ENCODE measurements at regions of chr17 and their contacts with region 1.

Region 1: GRCh38 chr17:44363613-44364159 is at the start of gene FAM171A2:
- DNase-seq: peak; percentile 66 to 75 (median 74)
- H3K4me3 ChIP-seq: peak within 1 kb of the TSS; percentile 57 to 84 (median 70)
- H3K27ac ChIP-seq: peak within 1 kb of the TSS in 1 of 2 experiments; percentile 54
- H3K4me1 ChIP-seq: peaks cover 0 to 32% (median 18%) of the 10 kb centered on the region in 4 experiments
- H3K27me3 ChIP-seq: peaks cover 0 to 3% (median 0%) of the 10 kb centered on the region in 5 experiments

Region 2: DNA sequence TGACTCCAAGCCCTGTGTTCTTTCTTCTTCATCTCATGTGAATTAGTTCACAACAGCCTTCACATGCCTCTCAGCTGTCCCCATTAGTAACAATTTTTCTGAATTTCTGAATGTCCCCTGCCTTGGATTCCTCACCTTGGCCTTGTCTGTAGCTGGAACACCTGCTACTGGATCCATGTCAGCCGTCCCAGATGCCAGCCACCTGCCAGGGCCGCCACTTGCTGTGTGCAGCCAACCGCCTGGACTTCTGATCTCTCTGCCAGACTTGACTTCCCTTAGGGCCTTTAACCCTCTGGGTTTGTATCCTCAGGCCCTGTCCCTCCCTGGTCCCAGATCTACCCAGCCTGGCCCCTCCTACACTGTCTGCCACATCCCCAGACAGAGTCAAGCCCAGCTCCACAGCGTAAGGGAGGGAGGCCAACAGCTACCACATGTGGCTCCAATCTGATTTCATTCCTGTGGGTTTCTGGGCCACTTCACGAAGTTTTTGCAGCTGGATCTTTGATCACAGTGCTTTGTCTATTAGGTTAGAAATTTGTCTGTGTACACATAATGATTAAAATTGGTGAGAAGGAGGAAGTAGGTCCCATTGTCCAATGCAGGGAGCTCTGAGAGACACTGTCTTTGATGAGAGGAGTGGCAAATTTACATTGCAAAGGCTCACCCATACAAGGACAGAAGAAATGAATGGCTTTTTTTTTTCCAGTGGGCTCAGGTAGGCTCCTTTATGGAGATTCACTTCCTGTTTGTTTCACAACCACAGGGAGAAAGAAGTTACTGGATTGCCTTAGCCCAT is 471.6 kb before region 1 on chr17:
- CTCF ChIA-PET with region 1: no interaction called
- POLR2A ChIA-PET with region 1: no interaction called
- DNase-seq: no peak
- H3K4me3 ChIP-seq: no peak overlapping the region
- H3K27ac ChIP-seq: no peak overlapping the region
- H3K4me1 ChIP-seq: no peaks in the 10 kb centered on the region
- H3K27me3 ChIP-seq: peaks cover 0 to 2% (median 0%) of the 10 kb centered on the region in 5 experiments

Region 3: GRCh38 chr17:44344939-44345453 is 18.7 kb before region 1 on chr17 and contains the start of gene GRN:
- CTCF ChIA-PET with region 1: interaction called, 21 read pairs
- POLR2A ChIA-PET with region 1: no interaction called
- DNase-seq: peak; percentile 90 to 93 (median 93)
- H3K4me3 ChIP-seq: peak within 1 kb of the TSS; percentile 78 to 97 (median 87)
- H3K27ac ChIP-seq: peak within 1 kb of the TSS in 1 of 2 experiments; percentile 75
- H3K4me1 ChIP-seq: peaks cover 5 to 30% (median 22%) of the 10 kb centered on the region in 4 experiments
- H3K27me3 ChIP-seq: peaks cover 0 to 3% (median 0%) of the 10 kb centered on the region in 5 experiments

Region 4: DNA sequence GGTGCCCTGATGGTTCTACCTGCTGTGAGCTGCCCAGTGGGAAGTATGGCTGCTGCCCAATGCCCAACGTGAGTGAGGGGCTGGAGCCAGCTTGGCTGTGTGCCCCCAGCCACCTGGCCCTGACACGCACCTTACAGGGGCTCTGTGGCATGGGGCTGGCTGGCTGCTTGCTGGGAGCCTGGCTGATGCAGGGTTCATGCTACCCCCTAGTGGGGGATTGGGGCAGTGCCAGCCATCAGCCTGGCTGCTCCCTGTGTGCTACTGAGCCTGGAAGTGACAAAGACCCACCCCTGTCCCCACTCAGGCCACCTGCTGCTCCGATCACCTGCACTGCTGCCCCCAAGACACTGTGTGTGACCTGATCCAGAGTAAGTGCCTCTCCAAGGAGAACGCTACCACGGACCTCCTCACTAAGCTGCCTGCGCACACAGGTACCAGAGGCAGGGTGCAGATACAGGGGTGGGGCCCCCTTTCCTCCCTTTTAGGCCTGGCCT is 12.9 kb before region 1 on chr17:
- CTCF ChIA-PET with region 1: interaction called, 21 read pairs
- POLR2A ChIA-PET with region 1: no interaction called
- DNase-seq: peak; percentile 72 to 81 (median 73)
- H3K4me3 ChIP-seq: no peak overlapping the region
- H3K27ac ChIP-seq: no peak overlapping the region
- H3K4me1 ChIP-seq: peaks cover 5 to 32% (median 24%) of the 10 kb centered on the region in 4 experiments
- H3K27me3 ChIP-seq: peaks cover 0 to 4% (median 0%) of the 10 kb centered on the region in 5 experiments

Measured in common myeloid progenitor, CD34-positive (primary cell).